Heart right ventricle (tissue), 16 donors: ENCODE measurements at regions of chr6 and their contacts with region 1.

Region 1: DNA sequence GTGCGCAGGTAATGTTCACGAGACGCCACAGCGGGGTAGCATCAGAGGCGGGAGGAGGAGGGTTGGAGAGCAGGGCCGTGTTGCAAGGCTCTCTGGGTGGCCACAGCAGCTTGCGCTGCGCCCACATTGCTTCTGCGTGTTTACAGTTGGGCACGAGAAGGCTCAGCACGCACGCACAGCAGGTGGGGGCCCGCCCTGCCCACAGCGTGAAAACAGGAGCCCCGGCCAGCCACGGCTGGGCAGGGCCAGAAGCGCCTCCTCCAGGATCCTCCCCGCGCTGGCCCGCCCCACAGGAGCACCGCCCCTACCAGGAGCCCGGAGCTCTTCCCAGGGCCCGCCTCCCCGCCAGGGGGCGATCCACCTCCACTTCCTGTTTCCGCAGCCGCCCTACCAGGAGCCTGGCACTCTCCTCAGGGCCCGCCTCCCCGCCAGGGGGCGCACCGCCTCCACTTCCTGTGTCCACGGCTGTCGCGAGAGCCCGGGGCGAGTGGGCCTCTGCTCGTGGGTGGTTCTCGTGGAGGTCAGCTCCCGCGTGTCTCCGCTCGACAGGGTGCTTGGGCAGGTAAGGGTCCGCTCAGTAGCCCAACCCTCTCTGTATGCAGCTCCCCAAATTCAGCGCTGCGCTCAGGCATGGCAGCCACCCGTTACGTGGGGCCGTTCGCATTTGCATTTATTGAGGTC is at the start of gene FAM50B:
- DNase-seq: peak; percentile 92 to 96
- ATAC-seq: peak; percentile 95 to 100 (median 98)
- H3K4me3 ChIP-seq: peak within 1 kb of the TSS; percentile 29 to 69 (median 60)
- H3K27ac ChIP-seq: peak within 1 kb of the TSS in 9 of 10 donors; percentile 69 to 83 (median 78)
- H3K4me1 ChIP-seq: peaks cover 0 to 28% (median 5%) of the 10 kb centered on the region in 9 donors
- H3K27me3 ChIP-seq: no peaks in the 10 kb centered on the region
- CTCF ChIP-seq: peak; percentile 84 to 98 (median 96)
- total RNA-seq, gene FAM50B: 13.2 to 31.3 (median 22.4) TPM

Region 2: GRCh38 chr6:3813150-3813780 is 35.8 kb before region 1 on chr6:
- intact Hi-C with region 1: no loop called
- DNase-seq: peak; percentile 62 to 87
- ATAC-seq: peak; percentile 84 to 97 (median 94)
- H3K4me3 ChIP-seq: no peak overlapping the region
- H3K27ac ChIP-seq: peak overlapping the region in 4 of 10 donors; percentile 3 to 50 (median 28)
- H3K4me1 ChIP-seq: peaks cover 0 to 31% (median 24%) of the 10 kb centered on the region in 9 donors
- H3K27me3 ChIP-seq: no peaks in the 10 kb centered on the region
- CTCF ChIP-seq: peak in 3 of 9 donors; percentile 25 to 33 (median 29)

Region 3: GRCh38 chr6:3929281-3929798 is 80.3 kb after region 1 on chr6:
- intact Hi-C with region 1: loop called in 6 of 10 experiments (anchors 1 to 5 kb)
- DNase-seq: no peak
- ATAC-seq: peak in 1 of 8 donors; percentile 50
- H3K4me3 ChIP-seq: no peak overlapping the region
- H3K27ac ChIP-seq: peak overlapping the region in 5 of 10 donors; percentile 5 to 56 (median 14)
- H3K4me1 ChIP-seq: peaks cover 0 to 40% (median 9%) of the 10 kb centered on the region in 9 donors
- H3K27me3 ChIP-seq: no peaks in the 10 kb centered on the region
- CTCF ChIP-seq: no peak

Region 4: GRCh38 chr6:3977875-3978711 is 129.0 kb after region 1 on chr6:
- intact Hi-C with region 1: loop called in 2 of 10 experiments (anchors 5 to 10 kb)
- DNase-seq: peak in 1 of 2 donors; percentile 24
- ATAC-seq: peak; percentile 75 to 92 (median 86)
- H3K4me3 ChIP-seq: no peak overlapping the region
- H3K27ac ChIP-seq: no peak overlapping the region
- H3K4me1 ChIP-seq: peaks cover 0 to 5% (median 0%) of the 10 kb centered on the region in 9 donors
- H3K27me3 ChIP-seq: no peaks in the 10 kb centered on the region
- CTCF ChIP-seq: peak; percentile 22 to 73 (median 64)

Region 5: DNA sequence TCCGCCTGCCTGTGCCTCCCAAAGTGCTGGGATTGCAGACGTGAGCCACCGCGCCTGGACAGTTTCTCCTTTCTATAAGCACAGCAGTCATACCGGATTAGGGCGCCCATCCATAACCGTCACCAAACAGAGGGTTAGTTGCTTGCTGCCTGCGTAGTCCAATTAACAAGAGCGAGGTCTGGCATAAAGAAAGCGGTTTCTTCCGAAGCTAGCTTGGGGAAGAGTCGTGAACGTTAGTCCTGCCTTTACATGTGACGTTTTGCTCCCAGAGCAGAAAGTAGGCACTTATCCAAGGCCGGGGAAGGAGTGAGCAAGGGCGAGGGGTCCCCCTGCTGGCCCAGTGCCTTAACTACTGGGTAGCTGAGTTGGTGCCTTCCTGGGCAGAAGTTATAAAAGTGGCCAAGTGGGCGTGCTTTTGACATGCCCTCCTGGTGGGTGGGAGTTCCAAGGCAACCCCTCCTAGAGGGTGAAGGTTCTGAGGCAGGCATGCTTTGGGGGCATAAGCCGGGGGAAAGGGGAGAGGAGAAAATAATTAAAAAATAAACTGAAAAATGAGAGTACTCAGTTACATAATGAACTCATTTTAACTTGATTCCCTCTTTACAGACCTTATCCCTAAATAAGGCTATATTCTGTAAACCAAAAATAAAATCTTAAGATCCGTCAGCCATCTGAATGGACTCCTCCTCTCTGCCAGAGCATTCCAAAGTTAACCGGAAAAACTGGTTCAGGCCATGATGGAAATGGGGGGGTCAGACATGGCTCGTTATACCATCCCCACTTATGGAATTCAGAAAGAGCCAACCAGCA is 141.8 kb after region 1 on chr6:
- intact Hi-C with region 1: loop called in 3 of 10 experiments (anchors 5 to 10 kb)
- DNase-seq: peak; percentile 85 to 91
- ATAC-seq: peak; percentile 85 to 97 (median 95)
- H3K4me3 ChIP-seq: peak overlapping the region in 9 of 10 donors; percentile 37 to 57 (median 53)
- H3K27ac ChIP-seq: peak overlapping the region in 8 of 10 donors; percentile 49 to 74 (median 66)
- H3K4me1 ChIP-seq: peaks cover 0 to 25% (median 13%) of the 10 kb centered on the region in 9 donors
- H3K27me3 ChIP-seq: no peaks in the 10 kb centered on the region
- CTCF ChIP-seq: peak; percentile 68 to 94 (median 87)